CD4-positive, alpha-beta memory T cell (primary cell): ENCODE measurements at regions of chr20 and their contacts with region 1.

Region 1: GRCh38 chr20:32945710-32946221 is 58.5 kb downstream of the SUN5 start:
- DNase-seq: peak in 4 of 5 donors; percentile 42 to 54 (median 50)
- H3K4me3 ChIP-seq: peak overlapping the region in 1 of 2 donors; percentile 9
- H3K4me3 Mint-ChIP-seq: peak overlapping the region; percentile 51 to 73 (median 66)
- H3K27ac ChIP-seq: no peak overlapping the region
- H3K27ac Mint-ChIP-seq: peak overlapping the region; percentile 54 to 93 (median 84)
- H3K4me1 ChIP-seq: peaks cover 36% of the 10 kb centered on the region
- H3K4me1 Mint-ChIP-seq: peaks cover 30 to 40% (median 36%) of the 10 kb centered on the region in 4 donors
- H3K27me3 ChIP-seq: no peaks in the 10 kb centered on the region
- H3K27me3 Mint-ChIP-seq: no peaks in the 10 kb centered on the region

Region 2: DNA sequence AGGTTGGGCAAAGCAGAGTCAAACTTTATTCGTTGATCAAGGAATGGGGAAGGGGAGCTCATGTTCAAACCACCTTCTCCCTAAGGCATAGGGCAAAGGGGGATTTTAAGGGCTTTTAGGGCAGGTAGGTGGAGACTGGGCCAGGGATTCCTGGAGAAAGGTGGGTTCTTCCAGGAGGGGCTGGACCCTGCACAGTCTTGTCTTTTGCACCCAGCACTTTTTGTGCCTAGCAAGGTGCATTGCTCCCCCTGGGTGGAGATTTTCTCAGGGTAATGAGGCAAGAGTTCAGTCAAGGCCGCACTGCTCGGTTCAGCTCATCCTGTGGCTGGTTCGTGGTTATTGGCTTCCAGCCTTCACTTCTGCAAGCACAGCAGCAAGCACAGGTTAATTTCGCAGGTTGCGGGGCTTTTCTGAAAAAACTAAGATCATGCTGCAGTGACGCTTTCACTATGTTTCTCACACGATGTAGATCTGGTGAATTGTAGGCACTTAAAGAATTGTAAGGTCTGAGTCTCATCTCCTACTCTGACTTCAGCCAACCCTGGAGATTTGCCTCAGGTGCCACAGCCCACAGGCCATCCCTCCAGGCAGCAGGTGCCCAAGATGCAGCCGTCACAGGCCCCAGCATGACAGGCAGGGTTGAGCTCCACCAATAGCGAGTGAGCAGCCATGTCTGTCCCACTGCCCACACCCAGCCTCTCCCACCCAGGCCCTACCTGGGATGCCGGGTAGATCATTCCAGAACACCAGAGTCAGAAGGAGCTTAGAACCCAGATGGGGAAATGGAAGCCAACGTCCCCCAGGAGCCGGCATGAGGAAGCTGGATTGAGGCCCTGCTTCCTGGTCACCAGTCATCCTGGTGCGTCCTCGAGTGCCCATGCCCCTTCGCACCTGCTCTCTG is 21.4 kb after region 1 on chr20:
- CTCF ChIA-PET with region 1: interaction called, 86 read pairs
- POLR2A ChIA-PET with region 1: interaction called, 33 read pairs
- intact Hi-C with region 1: loop called (anchors 1 kb)
- DNase-seq: peak; percentile 64 to 88 (median 71)
- H3K4me3 ChIP-seq: peak overlapping the region in 1 of 2 donors; percentile 25
- H3K4me3 Mint-ChIP-seq: peak overlapping the region; percentile 59 to 90 (median 79)
- H3K27ac ChIP-seq: peak overlapping the region; percentile 94
- H3K27ac Mint-ChIP-seq: peak overlapping the region in 4 of 7 donors; percentile 95 to 99 (median 97)
- H3K4me1 ChIP-seq: peaks cover 81% of the 10 kb centered on the region
- H3K4me1 Mint-ChIP-seq: peaks cover 15 to 62% (median 38%) of the 10 kb centered on the region in 4 donors
- H3K27me3 ChIP-seq: no peaks in the 10 kb centered on the region
- H3K27me3 Mint-ChIP-seq: no peaks in the 10 kb centered on the region

Region 3: GRCh38 chr20:32972181-32973076 is 26.7 kb after region 1 on chr20:
- CTCF ChIA-PET with region 1: interaction called, 86 read pairs
- POLR2A ChIA-PET with region 1: interaction called, 33 read pairs
- intact Hi-C with region 1: loop called (anchors 1 kb)
- DNase-seq: peak; percentile 91 to 97 (median 93)
- H3K4me3 ChIP-seq: peak overlapping the region; percentile 13 to 42
- H3K4me3 Mint-ChIP-seq: peak overlapping the region in 1 of 8 donors; percentile 36
- H3K27ac ChIP-seq: peak overlapping the region; percentile 94
- H3K27ac Mint-ChIP-seq: no peak overlapping the region
- H3K4me1 ChIP-seq: peaks cover 91% of the 10 kb centered on the region
- H3K4me1 Mint-ChIP-seq: peaks cover 8 to 70% (median 34%) of the 10 kb centered on the region in 4 donors
- H3K27me3 ChIP-seq: no peaks in the 10 kb centered on the region
- H3K27me3 Mint-ChIP-seq: no peaks in the 10 kb centered on the region

Region 4: GRCh38 chr20:33005132-33005566 is 59.4 kb after region 1 on chr20:
- CTCF ChIA-PET with region 1: interaction called, 17 read pairs
- POLR2A ChIA-PET with region 1: no interaction called
- intact Hi-C with region 1: loop called (anchors 5 kb)
- DNase-seq: peak in 4 of 5 donors; percentile 19 to 32 (median 28)
- H3K4me3 ChIP-seq: no peak overlapping the region
- H3K4me3 Mint-ChIP-seq: no peak overlapping the region
- H3K27ac ChIP-seq: no peak overlapping the region
- H3K27ac Mint-ChIP-seq: peak overlapping the region in 1 of 7 donors; percentile 35
- H3K4me1 ChIP-seq: peaks cover 11% of the 10 kb centered on the region
- H3K4me1 Mint-ChIP-seq: peaks cover 6 to 29% (median 14%) of the 10 kb centered on the region in 4 donors
- H3K27me3 ChIP-seq: no peaks in the 10 kb centered on the region
- H3K27me3 Mint-ChIP-seq: no peaks in the 10 kb centered on the region

Region 5: GRCh38 chr20:33097001-33097400 is 151.2 kb after region 1 on chr20:
- CTCF ChIA-PET with region 1: interaction called, 9 read pairs
- POLR2A ChIA-PET with region 1: no interaction called
- intact Hi-C with region 1: loop called (anchors 1 kb)
- DNase-seq: no peak
- H3K4me3 ChIP-seq: no peak overlapping the region
- H3K4me3 Mint-ChIP-seq: no peak overlapping the region
- H3K27ac ChIP-seq: no peak overlapping the region
- H3K27ac Mint-ChIP-seq: no peak overlapping the region
- H3K4me1 ChIP-seq: peaks cover 6% of the 10 kb centered on the region
- H3K4me1 Mint-ChIP-seq: peaks cover 0 to 6% (median 3%) of the 10 kb centered on the region in 4 donors
- H3K27me3 ChIP-seq: no peaks in the 10 kb centered on the region
- H3K27me3 Mint-ChIP-seq: peaks cover 2 to 3% of the 10 kb centered on the region in 2 donors

Region 6: GRCh38 chr20:33130568-33131061 is 184.8 kb after region 1 on chr20:
- CTCF ChIA-PET with region 1: no interaction called
- POLR2A ChIA-PET with region 1: no interaction called
- intact Hi-C with region 1: no loop called
- DNase-seq: no peak
- H3K4me3 ChIP-seq: no peak overlapping the region
- H3K4me3 Mint-ChIP-seq: no peak overlapping the region
- H3K27ac ChIP-seq: no peak overlapping the region
- H3K27ac Mint-ChIP-seq: no peak overlapping the region
- H3K4me1 ChIP-seq: no peaks in the 10 kb centered on the region
- H3K4me1 Mint-ChIP-seq: no peaks in the 10 kb centered on the region
- H3K27me3 ChIP-seq: no peaks in the 10 kb centered on the region
- H3K27me3 Mint-ChIP-seq: peaks cover 6 to 25% of the 10 kb centered on the region in 2 donors

Region 7: GRCh38 chr20:34210271-34210670 is 1264.5 kb after region 1 on chr20:
- CTCF ChIA-PET with region 1: no interaction called
- POLR2A ChIA-PET with region 1: no interaction called
- intact Hi-C with region 1: no loop called
- DNase-seq: no peak
- H3K4me3 ChIP-seq: no peak overlapping the region
- H3K4me3 Mint-ChIP-seq: no peak overlapping the region
- H3K27ac ChIP-seq: no peak overlapping the region
- H3K27ac Mint-ChIP-seq: no peak overlapping the region
- H3K4me1 ChIP-seq: no peaks in the 10 kb centered on the region
- H3K4me1 Mint-ChIP-seq: peaks cover 0 to 2% (median under 1%) of the 10 kb centered on the region in 4 donors
- H3K27me3 ChIP-seq: no peaks in the 10 kb centered on the region
- H3K27me3 Mint-ChIP-seq: peaks cover 8 to 15% of the 10 kb centered on the region in 2 donors